HepG2 (cell line): ENCODE measurements at regions of chr6 and their contacts with region 1.

Region 1: GRCh38 chr6:87799651-87800050 is 97.6 kb upstream of the AKIRIN2 start:
- DNase-seq: no peak
- ATAC-seq: no peak
- H3K4me3 ChIP-seq: peak overlapping the region in 2 of 3 experiments; percentile 23 to 41; a peak in 2 of 6 replicates
- H3K27ac ChIP-seq: peak overlapping the region; percentile 85
- H3K4me1 ChIP-seq: peaks cover 83% of the 10 kb centered on the region
- H3K27me3 ChIP-seq: no peaks in the 10 kb centered on the region
- CTCF ChIP-seq: no peak
- EP300 ChIP-seq: no peak
- POLR2A ChIP-seq: no peak
- RAD21 ChIP-seq: no peak

Region 2: DNA sequence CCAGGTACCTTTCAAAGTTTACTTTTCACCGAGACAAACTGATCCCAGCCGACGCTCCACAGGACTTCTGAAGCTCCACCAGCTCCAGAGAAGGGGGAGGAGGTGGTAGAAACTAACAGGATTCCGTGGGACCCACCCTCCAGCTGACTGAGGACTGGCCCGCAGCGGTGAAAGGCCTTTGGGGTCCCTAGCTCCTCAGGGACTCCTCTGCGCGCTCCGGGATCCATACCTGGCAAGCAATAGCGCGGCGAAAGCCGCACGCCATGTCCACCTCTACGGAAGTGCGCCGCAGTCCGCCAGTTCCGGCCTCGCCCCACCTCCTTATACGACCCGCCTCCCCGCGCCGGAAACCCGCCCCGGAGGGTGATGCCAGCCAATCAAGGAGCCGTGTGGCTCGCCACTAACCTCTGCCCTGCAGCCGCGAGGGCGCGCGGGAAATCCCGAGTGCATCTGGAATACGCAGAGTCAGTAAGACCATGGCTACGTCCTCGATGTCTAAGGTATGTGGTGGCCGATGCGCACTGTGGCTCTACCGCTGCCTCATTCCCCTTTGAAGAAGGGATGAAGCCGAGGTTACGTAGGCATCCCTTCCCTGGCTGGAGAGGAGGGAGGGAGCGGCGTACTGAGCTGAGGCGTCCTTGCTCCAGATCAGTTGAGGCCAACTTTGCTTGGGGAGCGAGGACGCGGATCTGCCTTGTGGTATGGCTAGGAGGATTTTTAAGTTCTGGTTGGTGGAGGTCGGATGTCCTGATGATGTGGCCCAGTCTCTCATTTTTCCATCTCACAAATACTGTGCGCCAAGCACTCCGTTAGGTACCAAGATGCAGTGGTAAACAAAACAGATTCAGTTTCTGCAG is 209.7 kb before region 1 on chr6 and contains the starts of genes ORC3 and RARS2:
- CTCF ChIA-PET with region 1: no interaction called
- POLR2A ChIA-PET with region 1: interaction called, 4 read pairs
- in situ Hi-C with region 1: no loop called
- intact Hi-C with region 1: loop called (anchors 5 kb)
- DNase-seq: peak; percentile 93
- ATAC-seq: peak; percentile 99
- H3K4me3 ChIP-seq: peak within 1 kb of the TSS; percentile 90 to 98 (median 95)
- H3K27ac ChIP-seq: peak within 1 kb of the TSS; percentile 80
- H3K4me1 ChIP-seq: peaks cover 59% of the 10 kb centered on the region
- H3K27me3 ChIP-seq: no peaks in the 10 kb centered on the region; a peak in 1 of 5 replicates
- CTCF ChIP-seq: peak; percentile 17; the same call in 1 of the 2 replicates
- EP300 ChIP-seq: no peak
- POLR2A ChIP-seq: peak; percentile 87 to 96
- RAD21 ChIP-seq: no peak
- total RNA-seq, gene ORC3: 43.5 and 56.0 TPM in 2 replicates
- total RNA-seq, gene RARS2: 80.1 and 103 TPM in 2 replicates

Region 3: DNA sequence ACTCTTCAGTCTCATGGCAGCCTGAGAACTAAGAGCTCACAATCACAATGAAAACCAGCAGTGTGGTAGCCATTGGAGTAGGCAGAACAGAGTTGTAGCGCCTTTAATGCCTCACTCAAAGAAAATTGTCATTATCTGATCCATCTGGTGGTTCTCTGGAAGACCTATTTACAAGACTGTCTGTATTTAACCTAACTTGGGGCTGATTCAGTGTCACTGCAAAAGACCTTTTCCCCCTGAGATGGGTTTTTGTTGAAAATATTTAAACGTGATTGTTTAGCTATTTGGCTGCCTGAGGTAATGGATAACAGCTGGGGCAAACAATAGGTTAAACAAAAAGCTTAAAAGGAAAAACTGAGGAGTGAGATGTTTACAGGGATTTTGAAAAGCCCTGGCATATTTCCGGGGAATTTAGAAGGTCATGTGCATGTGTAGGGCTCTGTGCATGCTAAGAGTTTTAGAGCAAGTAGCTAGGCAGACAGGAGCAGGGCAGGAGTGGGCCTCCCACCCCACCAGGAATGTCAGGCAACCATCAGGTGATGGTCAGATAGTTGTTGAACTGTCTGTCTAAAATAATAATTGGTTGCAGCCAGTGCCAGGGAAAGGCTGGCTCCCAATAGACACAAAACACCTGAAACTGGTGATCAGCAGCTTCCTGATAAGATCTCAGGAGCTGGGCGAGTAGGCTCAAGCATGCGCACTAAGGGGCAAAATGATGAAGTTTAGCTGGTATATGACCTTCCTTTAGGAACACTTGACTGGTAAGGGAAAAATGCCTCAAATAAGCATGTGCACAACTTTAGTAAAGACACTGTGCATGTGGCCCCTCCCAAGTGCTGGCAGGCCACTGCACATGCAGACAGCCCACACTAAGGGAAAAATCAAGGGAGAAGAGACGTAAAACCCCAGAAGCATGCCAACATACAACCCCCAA is 26.8 kb before region 1 on chr6:
- CTCF ChIA-PET with region 1: no interaction called
- POLR2A ChIA-PET with region 1: interaction called, 15 read pairs
- in situ Hi-C with region 1: no loop called
- intact Hi-C with region 1: no loop called
- DNase-seq: peak; percentile 94
- ATAC-seq: peak; percentile 93
- H3K4me3 ChIP-seq: peak overlapping the region in 2 of 3 experiments; percentile 11 to 15; a peak in 2 of 6 replicates
- H3K27ac ChIP-seq: peak overlapping the region; percentile 77
- H3K4me1 ChIP-seq: peaks cover 66% of the 10 kb centered on the region
- H3K27me3 ChIP-seq: no peaks in the 10 kb centered on the region
- CTCF ChIP-seq: no peak
- EP300 ChIP-seq: peak in 1 of 2 experiments; percentile 60; a peak in 1 of 4 replicates
- POLR2A ChIP-seq: 0 out of 4 replicates have a peak, but pooled peaks of 1 of the 2 experiments have one; percentile 20
- RAD21 ChIP-seq: no peak

Region 4: DNA sequence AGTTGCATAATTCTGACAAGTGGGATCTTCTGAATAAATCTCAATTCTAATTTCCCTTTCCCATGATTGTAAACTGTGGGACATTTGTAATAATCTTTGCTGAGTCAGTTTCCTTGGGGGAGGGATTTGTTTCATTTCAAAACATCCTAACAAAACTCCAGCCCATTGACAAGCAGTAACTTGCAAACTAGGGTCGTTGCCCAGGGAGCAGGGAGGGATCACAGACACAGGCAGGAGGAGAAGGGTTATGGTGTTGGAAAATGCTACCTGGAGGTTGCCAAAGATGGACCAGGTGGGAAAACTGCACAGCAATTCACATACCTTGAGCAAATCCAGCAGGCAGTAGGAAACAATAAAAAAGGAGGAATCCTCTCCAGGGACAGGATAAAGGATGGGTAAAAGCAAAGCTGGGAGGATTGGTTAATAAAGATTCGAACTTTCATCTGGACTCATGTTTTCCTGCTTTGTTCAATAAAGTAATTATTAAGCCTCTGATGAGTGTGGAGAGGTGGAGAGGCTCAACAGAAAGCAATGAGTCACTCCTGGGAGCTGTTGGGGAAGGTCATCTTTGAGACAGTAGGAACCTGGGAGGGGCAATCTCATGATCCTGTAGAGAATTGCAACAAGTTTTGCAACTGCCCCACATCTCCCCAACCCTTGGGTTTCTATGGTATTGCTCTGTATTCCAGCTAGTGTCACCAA is 10.3 kb before region 1 on chr6:
- CTCF ChIA-PET with region 1: no interaction called
- POLR2A ChIA-PET with region 1: interaction called, 18 read pairs
- in situ Hi-C with region 1: no loop called
- intact Hi-C with region 1: no loop called
- DNase-seq: peak; percentile 93
- ATAC-seq: peak; percentile 91
- H3K4me3 ChIP-seq: peak overlapping the region in 1 of 3 experiments; percentile 42; a peak in 3 of 6 replicates
- H3K27ac ChIP-seq: peak overlapping the region; percentile 68
- H3K4me1 ChIP-seq: peaks cover 83% of the 10 kb centered on the region
- H3K27me3 ChIP-seq: no peaks in the 10 kb centered on the region
- CTCF ChIP-seq: no peak
- EP300 ChIP-seq: peak in 1 of 2 experiments; percentile 89; a peak in 2 of 4 replicates
- POLR2A ChIP-seq: no peak
- RAD21 ChIP-seq: no peak

Region 5: GRCh38 chr6:87822011-87822410 is 22.4 kb after region 1 on chr6:
- CTCF ChIA-PET with region 1: no interaction called
- POLR2A ChIA-PET with region 1: interaction called, 14 read pairs
- in situ Hi-C with region 1: no loop called
- intact Hi-C with region 1: no loop called
- DNase-seq: peak; percentile 92
- ATAC-seq: peak; percentile 92
- H3K4me3 ChIP-seq: no peak overlapping the region; a peak in 1 of 6 replicates
- H3K27ac ChIP-seq: no peak overlapping the region
- H3K4me1 ChIP-seq: peaks cover 91% of the 10 kb centered on the region
- H3K27me3 ChIP-seq: no peaks in the 10 kb centered on the region
- CTCF ChIP-seq: no peak
- EP300 ChIP-seq: peak in 1 of 2 experiments; percentile 80; a peak in 2 of 4 replicates
- POLR2A ChIP-seq: no peak
- RAD21 ChIP-seq: no peak